CD14-positive monocyte (primary cell): ENCODE measurements at regions of chr12 and their contacts with region 1.

Region 1: DNA sequence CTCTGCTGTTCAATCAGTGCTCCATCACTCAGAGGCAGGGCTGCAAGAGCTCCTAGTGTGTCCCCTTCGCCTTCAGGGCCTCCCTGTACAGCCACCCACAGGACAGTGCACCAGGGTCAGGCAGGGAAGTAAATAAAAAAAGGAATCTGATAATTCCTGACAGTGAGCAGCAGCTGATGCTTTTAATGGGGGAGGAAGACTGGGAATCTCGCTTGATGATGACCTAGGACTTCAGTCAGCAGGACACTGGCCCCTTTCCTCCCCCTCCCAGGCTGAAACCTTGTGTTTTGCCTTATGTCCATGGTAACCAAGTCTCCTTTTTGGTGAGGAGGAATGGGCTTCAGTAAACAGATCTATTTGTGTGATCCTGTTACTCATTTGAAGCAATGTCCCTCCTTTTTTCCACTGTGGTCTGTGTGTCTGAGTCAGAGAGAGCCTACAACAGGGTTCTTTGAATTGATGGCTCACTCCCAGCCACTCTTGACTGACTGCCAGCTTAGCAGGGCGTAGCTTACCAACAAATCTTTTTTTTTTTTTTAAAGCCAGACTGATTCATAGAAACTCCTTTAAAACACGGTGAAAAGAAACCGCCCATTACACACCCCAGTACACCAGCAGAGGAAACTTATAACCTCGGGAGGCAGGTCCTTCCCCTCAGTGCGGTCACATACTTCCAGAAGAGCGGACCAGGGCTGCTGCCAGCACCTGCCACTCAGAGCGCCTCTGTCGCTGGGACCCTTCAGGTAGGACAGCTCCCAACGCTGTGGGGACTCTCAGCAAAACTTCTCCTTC is at the start of gene EMP1:
- DNase-seq: peak; percentile 85 to 96 (median 92)
- H3K4me3 ChIP-seq: peak within 1 kb of the TSS; percentile 19 to 73 (median 39)
- H3K4me3 Mint-ChIP-seq: peak within 1 kb of the TSS; percentile 84 to 89
- H3K27ac ChIP-seq: peak within 1 kb of the TSS in 1 of 2 donors; percentile 66
- H3K27ac Mint-ChIP-seq: peak within 1 kb of the TSS; percentile 54 to 91 (median 78)
- H3K4me1 ChIP-seq: peaks cover 45% of the 10 kb centered on the region in 2 donors
- H3K4me1 Mint-ChIP-seq: peaks cover 61% of the 10 kb centered on the region
- H3K27me3 ChIP-seq: no peaks in the 10 kb centered on the region
- H3K27me3 Mint-ChIP-seq: peaks cover 4 to 9% (median 6%) of the 10 kb centered on the region in 3 donors
- CTCF ChIP-seq: no peak
- polyA plus RNA-seq, gene EMP1: 2.7 to 6.3 (median 3.1) TPM

Region 2: DNA sequence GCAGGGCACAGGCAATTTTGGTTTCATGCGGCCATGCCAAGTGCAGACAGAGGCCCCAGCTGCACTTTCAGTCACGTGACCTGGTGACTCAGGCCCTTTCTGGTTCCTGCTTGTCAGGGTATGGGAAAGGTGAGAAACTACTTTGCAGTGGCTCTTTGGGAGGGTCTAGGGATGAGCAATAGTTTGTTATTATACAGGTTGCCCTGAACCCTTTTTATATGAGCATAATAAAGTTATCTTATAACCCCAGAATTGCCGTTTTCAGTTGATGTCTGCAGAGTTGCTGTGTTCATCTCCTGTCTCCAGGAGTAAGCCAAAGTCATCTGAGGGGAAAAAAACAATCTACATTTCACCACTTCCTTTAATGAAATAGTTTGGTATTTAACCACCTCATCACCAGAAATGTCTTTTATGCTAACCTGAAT is 30.7 kb before region 1 on chr12:
- intact Hi-C with region 1: loop called in 1 of 2 experiments (anchors 2 kb)
- DNase-seq: peak; percentile 76 to 88 (median 86)
- H3K4me3 ChIP-seq: peak overlapping the region in 1 of 3 experiments; percentile 29
- H3K4me3 Mint-ChIP-seq: no peak overlapping the region
- H3K27ac ChIP-seq: peak overlapping the region; percentile 37 to 65
- H3K27ac Mint-ChIP-seq: peak overlapping the region in 6 of 7 donors; percentile 39 to 80 (median 74)
- H3K4me1 ChIP-seq: peaks cover 32 to 34% of the 10 kb centered on the region in 2 donors
- H3K4me1 Mint-ChIP-seq: peaks cover 44% of the 10 kb centered on the region
- H3K27me3 ChIP-seq: no peaks in the 10 kb centered on the region
- H3K27me3 Mint-ChIP-seq: peaks cover 0 to 5% (median 0%) of the 10 kb centered on the region in 3 donors
- CTCF ChIP-seq: no peak

Region 3: GRCh38 chr12:13304924-13305323 is 108.6 kb after region 1 on chr12:
- intact Hi-C with region 1: no loop called
- DNase-seq: no peak
- H3K4me3 ChIP-seq: no peak overlapping the region
- H3K4me3 Mint-ChIP-seq: no peak overlapping the region
- H3K27ac ChIP-seq: no peak overlapping the region
- H3K27ac Mint-ChIP-seq: no peak overlapping the region
- H3K4me1 ChIP-seq: no peaks in the 10 kb centered on the region
- H3K4me1 Mint-ChIP-seq: no peaks in the 10 kb centered on the region
- H3K27me3 ChIP-seq: no peaks in the 10 kb centered on the region
- H3K27me3 Mint-ChIP-seq: peaks cover 4 to 9% (median 6%) of the 10 kb centered on the region in 3 donors
- CTCF ChIP-seq: no peak